GM12878 (cell line): ENCODE measurements at regions of chr1 and their contacts with region 1.

Region 1: DNA sequence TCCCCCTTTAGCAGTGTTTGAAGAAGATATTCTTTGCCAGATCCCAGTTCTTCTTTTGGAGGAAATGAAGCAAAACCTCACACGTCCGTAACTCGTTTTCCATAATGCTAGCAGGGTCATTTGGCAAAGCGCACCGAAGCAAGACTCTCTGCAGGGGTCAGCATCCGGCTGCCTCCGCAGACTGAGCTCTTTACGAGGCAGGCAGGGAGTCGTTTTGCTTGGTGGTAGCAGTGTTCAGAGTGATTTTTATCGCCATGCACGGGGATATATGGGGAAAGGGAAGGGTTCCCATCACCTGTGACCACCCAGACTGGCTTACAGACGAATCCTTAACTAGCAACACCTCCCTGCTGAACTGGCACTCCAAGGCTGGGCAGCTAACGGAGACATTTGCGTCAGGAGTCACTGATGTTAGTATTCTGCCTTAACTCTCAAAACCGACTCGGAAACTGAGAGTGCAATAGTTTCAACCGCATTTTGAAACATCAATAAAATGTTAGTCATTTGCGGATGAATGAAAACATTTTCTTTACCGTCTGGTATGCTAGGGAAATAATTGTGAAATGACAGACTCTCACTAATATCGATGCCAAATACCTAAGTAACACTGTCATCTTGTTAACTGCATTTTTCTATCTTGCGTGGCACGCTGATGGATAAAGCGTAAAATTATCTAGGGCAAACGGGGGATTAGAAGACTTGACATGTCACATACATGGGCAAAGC is 2.2 kb upstream of the NEGR1 start:
- DNase-seq: no peak
- ATAC-seq: peak; percentile 70
- H3K4me3 ChIP-seq: 0 out of 2 replicates have a peak overlapping the region, but pooled peaks have one; percentile 5
- H3K27ac ChIP-seq: no peak overlapping the region
- H3K4me1 ChIP-seq: peaks cover 4% of the 10 kb centered on the region
- H3K27me3 ChIP-seq: peaks cover 8 to 10% of the 10 kb centered on the region in 2 experiments; a peak in 3 of 4 replicates
- CTCF ChIP-seq: 0 out of 6 replicates have a peak, but pooled peaks of 1 of the 3 experiments have one; percentile 11
- EP300 ChIP-seq: no peak
- POLR2A ChIP-seq: no peak
- RAD21 ChIP-seq: peak; percentile 23; the same call in 1 of the 2 replicates

Region 2: GRCh38 chr1:72435025-72435424 is 150.5 kb after region 1 on chr1:
- CTCF ChIA-PET with region 1: no interaction called
- POLR2A ChIA-PET with region 1: no interaction called
- RAD21 ChIA-PET with region 1: no interaction called
- SMC1A ChIA-PET with region 1: no interaction called
- in situ Hi-C with region 1: no loop called
- intact Hi-C with region 1: loop called (anchors 2 kb)
- DNase-seq: no peak
- ATAC-seq: peak; percentile 71
- H3K4me3 ChIP-seq: no peak overlapping the region
- H3K27ac ChIP-seq: no peak overlapping the region
- H3K4me1 ChIP-seq: no peaks in the 10 kb centered on the region
- H3K27me3 ChIP-seq: no peaks in the 10 kb centered on the region
- CTCF ChIP-seq: no peak
- EP300 ChIP-seq: no peak
- POLR2A ChIP-seq: no peak
- RAD21 ChIP-seq: no peak